Activated CD4-positive, alpha-beta memory T cell treated with anti-CD3 and anti-CD28 coated beads for 36 hours (primary cell): ENCODE measurements at regions of chr12 and their contacts with region 1.

Region 1: GRCh38 chr12:31896514-31897039 is 62.6 kb upstream of the RESF1 start:
- DNase-seq: peak; percentile 92
- H3K4me3 Mint-ChIP-seq: peak overlapping the region; percentile 52
- H3K27ac Mint-ChIP-seq: peak overlapping the region; percentile 95
- H3K4me1 Mint-ChIP-seq: peaks cover 54% of the 10 kb centered on the region
- H3K27me3 Mint-ChIP-seq: no peaks in the 10 kb centered on the region

Region 2: DNA sequence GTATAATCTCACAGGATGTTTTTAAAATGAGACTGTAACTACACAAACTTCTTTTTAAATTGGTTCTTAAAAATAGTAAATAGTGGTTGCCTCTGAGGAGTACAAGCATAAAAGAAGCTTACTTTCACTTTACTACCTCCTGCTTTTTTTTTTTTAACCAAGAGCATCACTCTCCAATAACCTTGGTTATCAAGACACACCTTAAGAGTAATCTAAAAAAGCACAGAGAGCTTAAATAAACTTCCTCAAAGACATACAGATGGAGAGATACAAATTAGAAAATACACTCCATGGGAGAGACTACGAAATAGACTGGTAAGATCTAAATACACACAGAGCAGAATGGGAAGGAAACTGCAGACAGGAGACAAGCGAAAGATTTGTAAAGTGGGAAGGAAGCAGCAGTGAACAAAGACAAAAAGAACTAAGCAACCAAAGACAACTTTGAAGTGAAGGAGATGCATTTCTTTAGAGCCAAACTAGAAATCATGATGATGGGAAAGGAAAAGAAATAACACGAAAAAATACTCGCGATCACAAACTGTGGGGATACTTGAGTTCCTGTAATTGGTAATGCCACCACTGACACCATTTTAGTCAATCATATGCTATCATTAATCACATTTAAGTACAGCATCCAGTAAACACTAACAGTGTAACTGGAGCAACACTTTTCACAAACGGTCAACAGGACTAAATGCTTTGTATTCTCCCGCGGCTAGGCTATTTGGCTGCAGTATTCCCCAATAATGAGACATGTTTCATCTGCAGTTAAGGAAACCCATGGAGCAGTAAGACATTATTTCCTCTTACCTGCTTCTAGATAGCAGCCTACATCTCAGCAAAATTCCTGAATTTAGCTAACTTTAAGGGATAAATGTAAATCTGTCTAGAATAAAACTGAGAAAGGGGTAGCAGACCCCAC is 578.8 kb before region 1 on chr12:
- CTCF ChIA-PET with region 1: no interaction called
- POLR2A ChIA-PET with region 1: no interaction called
- intact Hi-C with region 1: loop called (anchors 1 kb)
- DNase-seq: no peak
- H3K4me3 Mint-ChIP-seq: peak overlapping the region; percentile 79
- H3K27ac Mint-ChIP-seq: peak overlapping the region; percentile 99
- H3K4me1 Mint-ChIP-seq: peaks cover 75% of the 10 kb centered on the region
- H3K27me3 Mint-ChIP-seq: no peaks in the 10 kb centered on the region

Region 3: DNA sequence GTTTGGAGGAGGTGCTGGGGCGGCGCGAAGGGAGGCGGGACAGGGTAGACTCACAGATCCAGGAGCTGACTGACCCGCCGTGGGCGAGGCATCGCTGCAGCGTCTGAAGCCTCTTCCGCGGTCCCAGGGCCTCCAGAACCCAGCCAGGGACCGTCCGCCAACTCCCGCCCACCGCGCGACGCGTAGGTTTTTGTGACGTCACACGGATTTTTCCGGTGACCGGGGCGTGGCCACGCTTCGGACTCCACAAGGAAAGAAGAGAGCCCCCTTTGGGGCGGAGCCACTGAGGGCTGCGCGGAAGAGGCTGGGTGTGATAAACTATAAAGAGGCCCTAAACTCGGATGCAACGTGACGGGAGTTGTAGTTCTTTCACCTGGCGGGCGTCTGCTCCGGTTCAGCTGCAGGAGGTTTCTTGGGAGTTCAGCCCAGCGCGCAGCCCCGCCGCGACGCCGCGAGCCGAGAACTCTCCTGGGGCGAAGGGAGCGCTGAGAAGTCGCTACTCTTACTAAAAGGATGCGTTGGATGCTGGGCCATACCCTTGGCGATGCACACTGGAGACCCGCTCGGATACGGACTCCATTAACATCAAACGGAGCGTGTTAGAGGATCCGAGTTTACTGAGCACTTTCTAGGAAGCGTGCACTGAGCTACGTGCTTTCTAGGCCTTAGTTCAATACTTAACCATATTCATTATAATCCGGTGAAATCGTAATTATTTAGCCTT is 167.5 kb before region 1 on chr12 and contains the start of gene AMN1:
- CTCF ChIA-PET with region 1: no interaction called
- POLR2A ChIA-PET with region 1: interaction called, 8 read pairs
- intact Hi-C with region 1: loop called (anchors 1 kb)
- DNase-seq: peak; percentile 100
- H3K4me3 Mint-ChIP-seq: peak within 1 kb of the TSS; percentile 96
- H3K27ac Mint-ChIP-seq: peak within 1 kb of the TSS; percentile 97
- H3K4me1 Mint-ChIP-seq: peaks cover 41% of the 10 kb centered on the region
- H3K27me3 Mint-ChIP-seq: no peaks in the 10 kb centered on the region
- total RNA-seq, gene AMN1: 3.2 to 4.7 TPM

Region 4: GRCh38 chr12:31756977-31757420 is 139.6 kb before region 1 on chr12:
- CTCF ChIA-PET with region 1: no interaction called
- POLR2A ChIA-PET with region 1: no interaction called
- intact Hi-C with region 1: no loop called
- DNase-seq: no peak
- H3K4me3 Mint-ChIP-seq: no peak overlapping the region
- H3K27ac Mint-ChIP-seq: no peak overlapping the region
- H3K4me1 Mint-ChIP-seq: peaks cover 11% of the 10 kb centered on the region
- H3K27me3 Mint-ChIP-seq: no peaks in the 10 kb centered on the region

Region 5: DNA sequence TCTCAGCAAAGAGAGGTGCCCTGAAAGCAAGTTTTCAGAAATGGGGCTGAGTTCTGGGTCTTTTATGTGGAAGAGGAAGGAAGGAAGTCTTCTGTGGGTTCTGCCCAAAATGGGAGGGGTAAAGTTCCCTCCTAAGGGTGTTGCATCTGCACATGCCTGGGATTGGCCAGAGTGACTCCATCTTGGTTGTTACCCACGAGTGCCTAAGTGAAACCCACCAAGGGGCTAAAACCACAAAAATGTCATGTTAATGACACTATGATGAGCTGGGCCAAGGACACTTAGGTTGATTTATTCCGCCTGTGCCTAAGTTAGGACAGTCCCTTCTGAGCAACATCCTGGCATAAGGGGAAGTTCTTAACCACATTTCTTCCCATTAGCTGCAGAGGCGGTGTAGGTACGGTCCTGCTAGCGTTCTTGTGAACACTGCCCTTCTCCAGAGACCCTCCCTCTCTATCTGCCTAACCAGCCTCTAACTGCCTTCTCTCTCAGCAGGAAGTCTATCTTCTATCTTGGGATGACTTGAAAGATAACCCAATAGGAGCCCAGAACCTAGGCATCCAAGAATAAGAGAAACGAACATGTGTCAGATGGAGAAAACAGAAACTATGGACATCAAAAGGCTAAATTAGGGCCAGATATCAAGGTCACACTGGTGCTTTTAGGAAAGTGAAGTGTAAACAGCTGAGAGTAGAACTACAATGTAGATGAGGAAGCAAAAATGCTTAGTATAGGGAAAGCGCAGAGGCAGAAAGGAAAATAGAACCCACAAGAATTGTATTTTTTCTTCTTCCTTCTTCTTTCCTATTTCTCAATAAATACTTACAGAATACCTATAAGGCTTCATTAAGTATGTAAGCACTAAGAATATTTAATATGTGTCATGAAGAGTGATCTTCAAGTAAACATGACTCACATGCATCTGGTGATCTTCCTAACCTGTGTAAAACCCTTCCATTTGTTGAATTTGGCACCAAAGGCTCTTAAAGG is 63.5 kb before region 1 on chr12:
- CTCF ChIA-PET with region 1: no interaction called
- POLR2A ChIA-PET with region 1: no interaction called
- intact Hi-C with region 1: loop called (anchors 1 kb)
- DNase-seq: peak; percentile 52
- H3K4me3 Mint-ChIP-seq: no peak overlapping the region
- H3K27ac Mint-ChIP-seq: peak overlapping the region; percentile 70
- H3K4me1 Mint-ChIP-seq: peaks cover 39% of the 10 kb centered on the region
- H3K27me3 Mint-ChIP-seq: no peaks in the 10 kb centered on the region

Region 6: DNA sequence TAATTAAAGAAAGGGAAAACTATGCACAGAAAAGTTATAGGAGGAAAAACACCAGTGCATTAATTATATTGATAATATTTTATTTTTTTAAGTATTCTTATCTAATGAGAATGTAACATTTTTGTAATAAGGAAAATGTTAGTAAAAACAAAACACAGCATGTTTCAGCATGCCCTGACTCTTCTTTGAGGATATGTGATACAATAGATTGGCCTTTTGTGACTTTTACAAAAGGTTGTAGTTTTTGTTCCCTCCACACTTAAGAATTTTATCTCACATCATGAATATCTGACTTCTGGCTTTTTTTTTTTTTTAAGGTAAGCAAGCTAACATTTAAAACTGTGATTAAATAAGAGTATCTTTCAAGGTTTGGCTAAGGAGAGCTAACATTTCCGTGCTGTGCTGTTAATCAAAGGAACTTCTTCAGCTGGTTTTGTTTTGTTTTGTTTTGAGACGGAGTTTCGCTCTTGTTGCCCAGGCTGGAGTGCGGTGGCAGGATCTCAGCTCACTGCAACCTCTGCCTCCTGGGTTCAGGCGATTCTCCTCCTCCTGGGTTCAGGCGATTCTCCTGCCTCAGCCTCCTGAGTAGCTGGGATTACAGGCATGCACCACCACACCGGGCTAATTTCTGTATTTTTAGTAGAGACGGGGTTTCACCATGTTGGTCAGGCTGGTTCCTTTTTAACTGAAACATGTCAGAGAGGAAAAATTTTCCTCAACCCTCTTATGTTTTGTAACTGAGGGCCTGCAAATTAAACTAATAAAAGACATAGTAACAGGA is 31.9 kb after region 1 on chr12:
- CTCF ChIA-PET with region 1: no interaction called
- POLR2A ChIA-PET with region 1: interaction called, 4 read pairs
- intact Hi-C with region 1: loop called (anchors 1 kb)
- DNase-seq: peak; percentile 54
- H3K4me3 Mint-ChIP-seq: peak overlapping the region; percentile 75
- H3K27ac Mint-ChIP-seq: peak overlapping the region; percentile 90
- H3K4me1 Mint-ChIP-seq: peaks cover 45% of the 10 kb centered on the region
- H3K27me3 Mint-ChIP-seq: no peaks in the 10 kb centered on the region

Region 7: GRCh38 chr12:31989571-31990362 is 93.2 kb after region 1 on chr12:
- CTCF ChIA-PET with region 1: interaction called, 3 read pairs
- POLR2A ChIA-PET with region 1: interaction called, 5 read pairs
- intact Hi-C with region 1: loop called (anchors 1 kb)
- DNase-seq: no peak
- H3K4me3 Mint-ChIP-seq: no peak overlapping the region
- H3K27ac Mint-ChIP-seq: peak overlapping the region; percentile 78
- H3K4me1 Mint-ChIP-seq: peaks cover 57% of the 10 kb centered on the region
- H3K27me3 Mint-ChIP-seq: no peaks in the 10 kb centered on the region

Region 8: GRCh38 chr12:32039347-32039746 is 142.8 kb after region 1 on chr12:
- CTCF ChIA-PET with region 1: no interaction called
- POLR2A ChIA-PET with region 1: no interaction called
- intact Hi-C with region 1: no loop called
- DNase-seq: no peak
- H3K4me3 Mint-ChIP-seq: no peak overlapping the region
- H3K27ac Mint-ChIP-seq: no peak overlapping the region
- H3K4me1 Mint-ChIP-seq: no peaks in the 10 kb centered on the region
- H3K27me3 Mint-ChIP-seq: no peaks in the 10 kb centered on the region

Region 9: DNA sequence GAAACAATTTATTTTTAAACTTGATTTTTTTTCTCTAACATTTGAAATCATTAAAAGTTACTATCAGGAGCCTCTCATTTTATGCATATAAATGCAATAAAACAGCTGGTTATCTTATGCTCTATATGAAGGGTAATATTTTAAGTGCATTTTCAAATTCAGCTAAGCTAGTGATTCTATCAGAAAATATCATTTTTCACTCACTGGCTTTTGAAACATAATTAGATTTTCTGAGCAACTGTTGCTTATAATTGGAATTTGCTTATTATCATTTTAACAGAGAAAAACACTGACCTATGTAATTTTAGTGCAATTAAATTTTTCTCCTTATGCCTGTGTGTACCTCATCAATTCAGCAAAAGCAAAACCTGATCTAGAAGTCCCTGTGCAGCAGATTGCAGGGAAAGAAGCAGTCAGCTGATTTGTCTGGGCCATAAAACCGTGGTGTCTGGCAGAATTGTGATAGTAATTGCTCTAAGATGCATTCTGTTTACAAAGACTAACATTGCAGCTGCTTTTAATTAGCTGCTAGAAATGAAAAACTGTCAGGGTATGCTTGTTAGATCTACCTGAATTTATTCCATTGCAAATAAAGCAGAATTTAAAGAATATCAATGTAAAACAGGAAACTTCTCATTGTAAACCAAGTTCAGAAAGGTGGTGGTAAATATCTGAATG is 285.1 kb after region 1 on chr12:
- CTCF ChIA-PET with region 1: no interaction called
- POLR2A ChIA-PET with region 1: no interaction called
- intact Hi-C with region 1: no loop called
- DNase-seq: no peak
- H3K4me3 Mint-ChIP-seq: no peak overlapping the region
- H3K27ac Mint-ChIP-seq: no peak overlapping the region
- H3K4me1 Mint-ChIP-seq: no peaks in the 10 kb centered on the region
- H3K27me3 Mint-ChIP-seq: no peaks in the 10 kb centered on the region

Region 10: DNA sequence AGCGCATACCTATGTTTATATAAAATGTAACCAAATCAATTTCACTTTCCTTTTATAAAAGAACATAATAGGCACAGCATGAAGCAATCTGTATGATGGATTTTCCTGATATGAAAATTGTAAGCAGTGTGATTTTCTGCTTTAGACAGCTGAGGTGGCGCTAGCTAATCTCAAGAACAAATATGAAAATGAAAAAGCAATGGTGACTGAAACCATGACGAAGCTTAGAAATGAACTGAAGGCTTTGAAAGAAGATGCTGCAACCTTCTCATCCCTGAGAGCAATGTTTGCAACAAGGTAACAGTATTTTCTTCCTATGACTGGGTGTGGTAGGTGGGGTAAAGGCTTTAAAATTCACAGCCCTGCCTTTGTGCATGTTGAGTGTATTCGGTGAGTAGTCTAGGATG is 437.8 kb after region 1 on chr12:
- CTCF ChIA-PET with region 1: no interaction called
- POLR2A ChIA-PET with region 1: no interaction called
- intact Hi-C with region 1: loop called (anchors 1 kb)
- DNase-seq: peak; percentile 11
- H3K4me3 Mint-ChIP-seq: no peak overlapping the region
- H3K27ac Mint-ChIP-seq: peak overlapping the region; percentile 51
- H3K4me1 Mint-ChIP-seq: peaks cover 5% of the 10 kb centered on the region
- H3K27me3 Mint-ChIP-seq: no peaks in the 10 kb centered on the region